AG04449 (cell line): ENCODE measurements at regions of chr1 and their contacts with region 1.

Region 1: DNA sequence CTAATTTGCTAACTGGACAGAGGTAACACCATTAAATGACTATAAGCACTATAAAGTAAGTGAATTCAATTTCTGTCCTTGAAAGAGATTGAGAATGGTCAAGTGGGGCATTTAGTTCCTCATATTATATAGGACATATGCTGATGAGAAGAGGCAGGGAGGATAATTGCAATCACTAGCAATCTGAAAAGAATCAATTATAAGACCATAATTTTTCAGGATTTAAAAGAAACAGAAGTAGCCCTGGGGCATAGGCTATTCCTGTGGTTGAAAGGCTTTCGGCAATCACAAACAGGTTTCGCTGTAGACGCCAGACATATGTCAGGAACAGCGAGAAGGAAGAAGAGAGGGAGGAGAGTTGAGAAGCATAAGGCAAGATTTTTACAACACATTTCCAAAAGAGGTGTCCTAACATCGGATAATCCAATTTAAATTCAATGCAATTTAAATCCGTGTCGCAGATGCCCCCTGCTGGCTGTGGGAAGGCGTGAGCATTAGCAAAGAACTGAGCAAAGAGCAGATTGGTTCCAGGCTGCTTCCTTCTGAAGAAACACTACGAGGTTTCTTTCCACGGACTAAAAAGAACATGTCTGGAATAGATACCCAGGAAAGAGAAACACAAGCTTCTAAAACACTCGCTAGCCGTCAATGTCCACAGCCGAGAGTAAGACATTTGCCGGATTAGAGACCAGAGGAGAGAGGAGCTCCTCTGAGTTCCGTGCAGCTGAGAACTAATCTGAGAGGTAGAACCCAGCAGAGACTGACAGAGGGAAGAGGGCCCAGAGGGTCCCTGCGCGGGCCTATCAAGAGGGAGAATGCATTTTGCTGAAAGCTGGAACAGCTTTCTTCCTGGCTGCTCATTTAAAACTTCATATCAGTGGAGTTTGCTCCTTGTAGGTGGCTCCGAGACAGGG is 27.9 kb downstream of the RGS5 start:
- DNase-seq: no peak
- H3K4me3 ChIP-seq: no peak overlapping the region
- CTCF ChIP-seq: peak; percentile 76

Region 2: GRCh38 chr1:162854245-162854882 is 320.4 kb before region 1 on chr1:
- CTCF ChIA-PET with region 1: interaction called, 79 read pairs
- POLR2A ChIA-PET with region 1: no interaction called
- DNase-seq: no peak
- H3K4me3 ChIP-seq: no peak overlapping the region
- CTCF ChIP-seq: peak; percentile 63

Region 3: DNA sequence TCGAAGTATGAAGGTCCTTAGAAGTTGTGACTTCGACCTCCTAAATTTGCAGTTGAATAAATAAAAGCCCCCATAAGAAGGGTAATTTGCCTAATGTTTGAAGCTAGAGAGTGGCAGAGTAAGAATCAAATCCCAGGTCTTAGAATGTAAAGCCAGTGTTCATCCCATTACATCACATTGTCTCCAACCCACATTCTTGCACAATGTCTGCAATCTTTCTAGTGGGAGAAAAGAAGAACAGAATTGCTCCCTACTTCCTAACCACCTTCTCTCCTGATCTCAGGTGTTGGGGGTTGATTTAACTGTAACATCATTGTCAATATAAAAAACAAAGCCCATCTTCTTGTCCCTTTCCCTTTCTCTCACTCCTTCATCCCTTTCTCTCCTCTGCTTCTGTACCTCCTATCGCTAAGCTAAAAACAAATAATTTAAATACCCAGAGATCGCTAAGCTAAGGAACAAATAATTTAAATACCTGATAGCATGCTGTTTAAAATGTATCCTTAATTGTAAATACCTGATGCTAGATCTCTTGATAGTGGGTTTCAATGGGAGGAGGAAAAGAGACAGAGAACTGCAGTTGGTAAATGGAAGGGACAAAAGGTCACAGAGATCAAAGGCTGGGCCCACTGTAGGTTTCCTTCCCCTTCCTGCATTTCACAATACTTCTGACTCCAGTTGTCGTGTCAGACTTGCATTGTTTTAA is 281.7 kb before region 1 on chr1:
- CTCF ChIA-PET with region 1: interaction called, 13 read pairs
- POLR2A ChIA-PET with region 1: no interaction called
- DNase-seq: no peak
- H3K4me3 ChIP-seq: no peak overlapping the region
- CTCF ChIP-seq: no peak

Region 4: DNA sequence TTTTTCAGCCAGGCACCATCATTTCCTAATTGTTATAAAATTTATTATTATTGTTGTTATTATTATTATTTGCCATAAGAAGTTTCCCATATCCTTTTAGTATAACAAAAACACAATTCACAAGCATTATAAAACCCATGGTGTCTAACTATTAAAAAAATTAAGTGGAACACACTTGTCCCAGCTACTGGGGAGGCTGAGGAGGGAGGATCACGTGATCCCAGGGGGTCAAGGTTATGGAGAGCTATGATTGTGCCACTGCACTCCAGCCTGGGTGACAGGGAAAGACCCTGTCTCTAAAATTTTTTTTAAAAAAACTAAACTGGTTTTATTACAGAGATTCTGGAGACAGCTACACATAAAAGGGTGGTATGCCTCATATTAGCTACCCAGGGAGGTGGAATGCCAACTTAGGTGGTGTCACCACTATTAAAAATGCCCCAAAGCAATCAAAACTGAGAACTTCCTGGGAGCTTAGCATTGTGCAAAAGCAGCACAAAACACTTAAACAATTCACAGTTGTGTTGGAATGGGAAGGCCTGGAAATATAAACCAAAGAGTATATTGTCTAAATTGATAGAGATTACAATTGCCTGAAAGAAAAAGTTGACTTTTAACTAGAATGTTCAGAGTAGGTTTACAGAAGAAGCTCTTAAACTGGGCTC is 114.3 kb before region 1 on chr1:
- CTCF ChIA-PET with region 1: interaction called, 12 read pairs
- POLR2A ChIA-PET with region 1: no interaction called
- DNase-seq: no peak
- H3K4me3 ChIP-seq: no peak overlapping the region
- CTCF ChIP-seq: no peak

Region 5: GRCh38 chr1:163090321-163090945 is 84.3 kb before region 1 on chr1:
- CTCF ChIA-PET with region 1: interaction called, 11 read pairs
- POLR2A ChIA-PET with region 1: no interaction called
- DNase-seq: no peak
- H3K4me3 ChIP-seq: no peak overlapping the region
- CTCF ChIP-seq: no peak

Region 6: DNA sequence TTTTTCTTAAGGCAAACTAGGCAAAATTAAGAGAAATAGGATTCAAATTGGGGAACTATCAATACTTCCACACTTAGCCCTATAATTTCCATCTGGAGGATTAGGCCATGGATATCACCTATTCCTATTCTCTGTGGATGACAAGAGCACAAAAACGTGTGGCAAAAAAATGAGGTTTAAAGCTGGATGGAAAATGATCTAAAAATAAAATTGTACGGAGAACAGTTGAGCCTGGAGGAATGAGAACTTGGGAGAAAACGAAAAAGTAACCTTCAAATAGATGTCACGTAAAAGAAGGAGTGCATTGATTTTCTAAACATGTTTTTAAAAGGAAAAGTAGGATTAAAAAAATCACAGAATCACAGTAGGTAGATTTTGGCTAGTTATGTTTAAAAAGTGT is 50.0 kb before region 1 on chr1:
- CTCF ChIA-PET with region 1: no interaction called
- POLR2A ChIA-PET with region 1: no interaction called
- DNase-seq: no peak
- H3K4me3 ChIP-seq: no peak overlapping the region
- CTCF ChIP-seq: no peak

Region 7: DNA sequence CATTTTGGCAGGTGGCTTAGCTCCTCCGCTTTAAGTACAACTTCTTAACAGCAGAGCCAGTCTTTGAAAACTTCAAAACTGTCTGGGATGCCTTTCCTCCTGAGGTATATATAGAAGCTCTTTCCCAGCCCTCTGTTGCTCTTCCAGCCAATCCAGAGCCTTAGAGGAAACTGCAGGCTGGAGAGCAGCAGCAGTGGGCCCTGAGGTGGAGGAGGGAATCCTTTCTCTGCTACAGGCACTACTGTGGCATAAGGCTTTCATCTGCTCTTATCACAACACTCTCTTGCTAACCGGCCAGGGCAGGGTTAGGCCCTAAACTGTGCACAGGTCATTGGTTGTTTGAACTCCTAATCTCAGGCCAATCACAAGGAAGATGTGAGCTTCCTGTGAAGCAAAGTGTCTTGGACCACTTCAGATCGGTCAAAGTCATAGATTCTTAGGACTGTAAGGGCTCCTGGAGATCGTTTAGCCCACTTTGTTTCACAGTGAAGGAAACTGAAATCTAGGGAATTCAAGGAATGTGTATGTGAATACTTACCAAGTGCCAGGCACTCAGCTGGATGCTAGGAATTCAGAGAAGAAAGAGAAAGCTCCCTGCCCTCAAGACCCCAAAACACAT is 28.2 kb after region 1 on chr1 and contains the start of gene RGS5:
- CTCF ChIA-PET with region 1: interaction called, 24 read pairs
- POLR2A ChIA-PET with region 1: no interaction called
- DNase-seq: no peak
- H3K4me3 ChIP-seq: no peak within 1 kb of the TSS
- CTCF ChIP-seq: no peak